Activated CD4-positive, alpha-beta T cell treated with anti-CD3 and anti-CD28 coated beads for 36 hours (primary cell): ENCODE measurements at regions of chr7 and their contacts with region 1.

Region 1: GRCh38 chr7:71733107-71733870 is 601.3 kb downstream of the GALNT17 start:
- DNase-seq: peak; percentile 87
- ATAC-seq: peak; percentile 19
- H3K4me3 Mint-ChIP-seq: no peak overlapping the region
- H3K27ac Mint-ChIP-seq: no peak overlapping the region
- H3K4me1 Mint-ChIP-seq: no peaks in the 10 kb centered on the region
- H3K27me3 Mint-ChIP-seq: peaks cover 4% of the 10 kb centered on the region

Region 2: GRCh38 chr7:70829221-70830059 is 903.8 kb before region 1 on chr7:
- CTCF ChIA-PET with region 1: interaction called, 18 read pairs
- POLR2A ChIA-PET with region 1: no interaction called
- intact Hi-C with region 1: loop called (anchors 1 to 10 kb)
- DNase-seq: peak; percentile 78
- ATAC-seq: peak; percentile 64
- H3K4me3 Mint-ChIP-seq: peak overlapping the region; percentile 0
- H3K27ac Mint-ChIP-seq: no peak overlapping the region
- H3K4me1 Mint-ChIP-seq: peaks cover 12% of the 10 kb centered on the region
- H3K27me3 Mint-ChIP-seq: peaks cover 9% of the 10 kb centered on the region

Region 3: DNA sequence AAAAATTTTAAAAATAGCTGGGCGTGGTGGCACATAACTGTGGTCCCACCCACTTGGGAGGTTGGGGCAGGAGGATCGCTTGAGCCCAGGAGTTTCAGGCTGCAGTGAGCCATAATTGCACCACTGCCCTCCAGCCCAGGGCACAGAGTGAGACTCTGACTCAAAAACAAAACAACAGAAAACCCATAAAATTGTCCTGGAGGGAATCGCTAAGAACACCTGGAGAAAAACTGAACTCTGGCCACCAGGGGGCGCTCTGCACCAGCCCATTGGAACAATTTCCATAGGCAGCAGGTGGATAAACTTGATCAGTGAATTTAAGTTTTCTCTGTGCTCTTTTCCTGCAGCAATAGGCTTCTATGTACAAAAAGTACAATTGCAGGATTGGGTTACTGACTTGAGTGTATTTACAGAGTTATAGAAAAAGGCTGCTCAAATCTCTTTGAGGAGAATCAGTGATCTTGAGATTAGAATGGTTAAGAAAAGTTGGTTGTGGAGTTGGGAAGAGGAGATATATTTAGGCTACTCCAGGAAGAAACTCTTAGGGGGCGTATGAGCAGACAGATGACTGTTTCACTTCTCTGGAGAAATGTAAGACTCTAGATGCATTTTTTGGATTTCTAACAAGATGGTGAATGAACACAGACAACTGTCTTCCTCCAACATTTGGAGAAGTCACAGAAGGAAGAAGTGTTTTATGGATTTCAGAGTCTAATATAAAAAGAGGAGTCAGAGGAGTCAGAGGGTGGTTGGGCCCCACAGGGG is 876.2 kb before region 1 on chr7:
- CTCF ChIA-PET with region 1: interaction called, 12 read pairs
- POLR2A ChIA-PET with region 1: no interaction called
- intact Hi-C with region 1: loop called (anchors 1 kb)
- DNase-seq: peak; percentile 82
- ATAC-seq: no peak
- H3K4me3 Mint-ChIP-seq: no peak overlapping the region
- H3K27ac Mint-ChIP-seq: no peak overlapping the region
- H3K4me1 Mint-ChIP-seq: no peaks in the 10 kb centered on the region
- H3K27me3 Mint-ChIP-seq: no peaks in the 10 kb centered on the region

Region 4: GRCh38 chr7:72435366-72435765 is 702.1 kb after region 1 on chr7:
- CTCF ChIA-PET with region 1: no interaction called
- POLR2A ChIA-PET with region 1: no interaction called
- intact Hi-C with region 1: no loop called
- DNase-seq: no peak
- ATAC-seq: no peak
- H3K4me3 Mint-ChIP-seq: no peak overlapping the region
- H3K27ac Mint-ChIP-seq: no peak overlapping the region
- H3K4me1 Mint-ChIP-seq: no peaks in the 10 kb centered on the region
- H3K27me3 Mint-ChIP-seq: no peaks in the 10 kb centered on the region